Endothelial cell of umbilical vein (primary cell): ENCODE measurements at regions of chr9 and their contacts with region 1.

Region 1: DNA sequence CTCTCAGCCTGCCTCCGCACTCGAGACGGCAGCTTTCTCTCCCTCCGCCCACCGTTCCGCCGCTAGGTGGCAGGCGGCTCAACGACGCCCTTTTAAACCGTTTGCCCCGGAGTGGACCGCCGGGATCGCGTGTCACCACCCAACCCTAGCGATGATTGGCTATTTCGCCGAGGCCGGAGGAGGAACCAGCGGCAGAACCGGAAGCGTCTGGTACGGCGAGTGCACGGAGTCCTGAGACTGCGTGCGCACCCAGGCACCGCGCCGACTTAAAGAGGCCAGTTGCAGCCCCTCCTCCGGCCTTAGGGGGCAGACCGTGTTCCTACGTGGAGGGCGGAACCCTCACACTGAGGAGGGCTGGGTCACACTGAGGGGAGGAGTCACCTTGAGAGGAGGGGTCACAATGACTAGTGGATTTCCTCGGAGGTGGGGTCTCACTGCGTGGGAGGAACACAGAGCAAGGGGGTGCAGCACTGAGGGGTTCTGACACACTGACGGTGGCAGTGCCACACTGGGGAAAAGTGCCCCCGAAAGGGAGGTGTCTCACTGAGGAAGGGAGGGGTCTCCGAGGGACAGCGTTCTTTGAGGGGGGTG is 980 bp upstream of the TESK1 start:
- DNase-seq: peak; percentile 100
- H3K4me3 ChIP-seq: peak overlapping the region; percentile 0 to 41 (median 27)
- H3K27ac ChIP-seq: no peak overlapping the region
- H3K4me1 ChIP-seq: peaks cover 16% of the 10 kb centered on the region
- H3K27me3 ChIP-seq: peaks cover 0 to 2% of the 10 kb centered on the region in 2 experiments
- CTCF ChIP-seq: peak; percentile 88 to 99
- POLR2A ChIP-seq: no peak

Region 2: DNA sequence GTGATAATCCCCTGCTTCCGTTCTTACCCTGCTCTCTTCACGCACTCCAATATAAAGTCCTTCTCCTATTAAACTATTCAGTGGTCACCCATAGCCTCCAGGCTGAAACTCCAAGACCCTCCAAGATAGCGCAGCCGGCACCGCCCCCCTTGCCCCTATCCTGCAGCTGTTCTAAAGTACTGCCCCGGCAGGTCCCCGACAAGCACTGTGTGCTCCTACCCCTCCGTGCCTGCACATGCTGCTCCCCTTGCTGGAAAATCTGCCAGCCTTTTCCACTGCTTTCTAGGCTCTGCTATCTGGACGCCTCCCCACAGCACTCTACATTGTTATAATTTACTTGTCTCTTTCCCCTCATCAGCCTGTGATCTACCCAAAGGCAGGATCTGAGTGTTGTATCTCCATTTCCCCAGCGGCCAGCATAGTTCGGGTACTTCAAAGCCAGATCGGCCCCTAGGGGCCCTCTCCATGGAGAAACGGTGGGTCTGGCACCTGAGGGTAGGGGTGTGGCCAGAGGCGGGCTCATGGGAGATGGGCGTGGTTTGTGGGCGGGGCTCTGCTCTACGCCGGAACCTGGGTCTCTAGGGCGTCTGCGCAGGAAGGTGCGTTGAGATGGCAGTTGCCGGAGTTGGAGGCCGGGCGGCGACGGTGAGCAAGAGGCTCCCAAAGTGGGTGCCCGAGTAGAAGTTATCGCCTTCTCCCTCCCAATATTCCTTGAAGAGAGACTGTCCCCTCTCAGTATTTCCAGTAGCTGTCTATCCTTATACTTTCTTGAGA is 197.7 kb before region 1 on chr9:
- CTCF ChIA-PET with region 1: no interaction called
- POLR2A ChIA-PET with region 1: no interaction called
- dilution Hi-C with region 1: no loop called
- intact Hi-C with region 1: no loop called
- DNase-seq: no peak
- H3K4me3 ChIP-seq: no peak overlapping the region
- H3K27ac ChIP-seq: no peak overlapping the region
- H3K4me1 ChIP-seq: no peaks in the 10 kb centered on the region
- H3K27me3 ChIP-seq: no peaks in the 10 kb centered on the region
- CTCF ChIP-seq: no peak
- POLR2A ChIP-seq: no peak

Region 3: GRCh38 chr9:35646533-35647265 is 42.6 kb after region 1 on chr9:
- CTCF ChIA-PET with region 1: interaction called, 13 read pairs
- POLR2A ChIA-PET with region 1: no interaction called
- dilution Hi-C with region 1: no loop called
- intact Hi-C with region 1: no loop called
- DNase-seq: peak; percentile 91
- H3K4me3 ChIP-seq: peak overlapping the region; percentile 39 to 80 (median 47)
- H3K27ac ChIP-seq: peak overlapping the region; percentile 24
- H3K4me1 ChIP-seq: peaks cover 6% of the 10 kb centered on the region
- H3K27me3 ChIP-seq: peaks cover 0 to 2% of the 10 kb centered on the region in 2 experiments
- CTCF ChIP-seq: peak; percentile 91 to 98
- POLR2A ChIP-seq: peak; percentile 27

Region 4: GRCh38 chr9:35690431-35691333 is 86.6 kb after region 1 on chr9:
- CTCF ChIA-PET with region 1: interaction called, 6 read pairs
- POLR2A ChIA-PET with region 1: no interaction called
- dilution Hi-C with region 1: no loop called
- intact Hi-C with region 1: loop called (anchors 2 kb)
- DNase-seq: peak; percentile 72
- H3K4me3 ChIP-seq: peak overlapping the region; percentile 66 to 82 (median 70)
- H3K27ac ChIP-seq: peak overlapping the region; percentile 45
- H3K4me1 ChIP-seq: peaks cover 28% of the 10 kb centered on the region
- H3K27me3 ChIP-seq: no peaks in the 10 kb centered on the region
- CTCF ChIP-seq: no peak
- POLR2A ChIP-seq: peak; percentile 65